A549 (cell line): ENCODE measurements at regions of chr17 and their contacts with region 1.

Region 1: GRCh38 chr17:46193626-46194392 is 580 bp upstream of the KANSL1 start:
- DNase-seq: peak; percentile 97 to 100
- ATAC-seq: peak; percentile 84 to 97
- H3K4me3 ChIP-seq: peak overlapping the region; percentile 65
- H3K27ac ChIP-seq: peak overlapping the region; percentile 90 to 97
- H3K4me1 ChIP-seq: peaks cover 49% of the 10 kb centered on the region
- CTCF ChIP-seq: peak; percentile 80
- EP300 ChIP-seq: no peak
- POLR2A ChIP-seq: peak; percentile 88
- RAD21 ChIP-seq: peak in 1 of 2 experiments; percentile 20; a peak in 2 of 5 replicates

Region 2: GRCh38 chr17:46002311-46002972 is 191.4 kb before region 1 on chr17:
- CTCF ChIA-PET with region 1: interaction called, 23 read pairs
- POLR2A ChIA-PET with region 1: no interaction called
- DNase-seq: peak; percentile 69 to 78
- ATAC-seq: peak; percentile 89 to 91
- H3K4me3 ChIP-seq: no peak overlapping the region
- H3K27ac ChIP-seq: peak overlapping the region in 1 of 2 experiments; percentile 61; a peak in 3 of 6 replicates
- H3K4me1 ChIP-seq: peaks cover 15% of the 10 kb centered on the region
- CTCF ChIP-seq: peak; percentile 93
- EP300 ChIP-seq: no peak
- POLR2A ChIP-seq: no peak
- RAD21 ChIP-seq: peak; percentile 96 to 97

Region 3: DNA sequence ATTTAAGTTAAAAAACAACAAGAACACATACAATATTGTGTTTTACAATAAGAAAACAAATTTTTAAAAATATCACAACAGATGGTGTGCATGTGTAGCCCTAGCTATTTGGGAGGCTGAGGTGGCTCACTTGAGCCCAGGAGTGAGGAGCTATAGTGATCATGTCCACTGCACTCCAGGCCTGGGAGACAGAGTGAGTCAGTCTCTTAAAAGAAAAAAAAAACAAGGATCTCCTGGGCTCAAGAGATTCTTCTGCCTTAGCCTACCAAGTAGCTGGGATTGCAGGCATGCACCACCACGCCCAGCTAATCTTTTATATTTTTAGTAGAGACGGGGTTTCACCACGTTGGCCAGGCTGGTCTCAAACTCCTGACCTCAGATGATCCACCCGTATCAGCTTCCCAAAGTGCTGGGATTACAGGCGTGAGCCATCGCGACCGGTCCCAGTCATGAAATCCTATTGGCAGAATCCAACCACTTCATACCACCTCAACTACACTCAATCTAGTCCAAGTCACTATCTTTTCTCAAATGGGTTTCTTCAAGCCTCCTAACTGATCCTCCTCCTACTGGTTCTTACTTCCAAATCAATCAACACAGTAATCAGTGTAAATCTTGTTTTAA is 139.8 kb before region 1 on chr17:
- CTCF ChIA-PET with region 1: interaction called, 30 read pairs
- POLR2A ChIA-PET with region 1: interaction called, 5 read pairs
- DNase-seq: peak in 1 of 2 experiments; percentile 43
- ATAC-seq: peak in 1 of 2 experiments; percentile 48; a peak in 3 of 6 replicates
- H3K4me3 ChIP-seq: no peak overlapping the region
- H3K27ac ChIP-seq: peak overlapping the region; percentile 5 to 43; a peak in 3 of 6 replicates
- H3K4me1 ChIP-seq: peaks cover 64% of the 10 kb centered on the region
- CTCF ChIP-seq: no peak
- EP300 ChIP-seq: no peak
- POLR2A ChIP-seq: no peak
- RAD21 ChIP-seq: no peak

Region 4: GRCh38 chr17:46078675-46079074 is 115.1 kb before region 1 on chr17:
- CTCF ChIA-PET with region 1: interaction called, 21 read pairs
- POLR2A ChIA-PET with region 1: interaction called, 3 read pairs
- DNase-seq: no peak
- ATAC-seq: no peak
- H3K4me3 ChIP-seq: no peak overlapping the region
- H3K27ac ChIP-seq: no peak overlapping the region
- H3K4me1 ChIP-seq: peaks cover 28% of the 10 kb centered on the region
- CTCF ChIP-seq: no peak
- EP300 ChIP-seq: no peak
- POLR2A ChIP-seq: no peak
- RAD21 ChIP-seq: no peak

Region 5: GRCh38 chr17:46108550-46109110 is 85.2 kb before region 1 on chr17:
- CTCF ChIA-PET with region 1: interaction called, 18 read pairs
- POLR2A ChIA-PET with region 1: interaction called, 3 read pairs
- DNase-seq: no peak
- ATAC-seq: peak in 1 of 2 experiments; percentile 27; a peak in 3 of 6 replicates
- H3K4me3 ChIP-seq: no peak overlapping the region
- H3K27ac ChIP-seq: peak overlapping the region; percentile 14 to 40; a peak in 4 of 6 replicates
- H3K4me1 ChIP-seq: peaks cover 44% of the 10 kb centered on the region
- CTCF ChIP-seq: no peak
- EP300 ChIP-seq: no peak
- POLR2A ChIP-seq: no peak
- RAD21 ChIP-seq: no peak

Region 6: GRCh38 chr17:46154151-46154816 is 39.5 kb before region 1 on chr17:
- CTCF ChIA-PET with region 1: interaction called, 27 read pairs
- POLR2A ChIA-PET with region 1: no interaction called
- DNase-seq: no peak
- ATAC-seq: peak; percentile 15 to 17; a peak in 3 of 6 replicates
- H3K4me3 ChIP-seq: no peak overlapping the region
- H3K27ac ChIP-seq: no peak overlapping the region
- H3K4me1 ChIP-seq: peaks cover 78% of the 10 kb centered on the region
- CTCF ChIP-seq: no peak
- EP300 ChIP-seq: no peak
- POLR2A ChIP-seq: no peak
- RAD21 ChIP-seq: no peak

Region 7: GRCh38 chr17:46212634-46213435 is 19.0 kb after region 1 on chr17:
- CTCF ChIA-PET with region 1: interaction called, 176 read pairs
- POLR2A ChIA-PET with region 1: interaction called, 21 read pairs
- DNase-seq: peak; percentile 88 to 95
- ATAC-seq: peak; percentile 91 to 92
- H3K4me3 ChIP-seq: no peak overlapping the region
- H3K27ac ChIP-seq: no peak overlapping the region
- H3K4me1 ChIP-seq: no peaks in the 10 kb centered on the region
- CTCF ChIP-seq: peak; percentile 99
- EP300 ChIP-seq: no peak
- POLR2A ChIP-seq: no peak
- RAD21 ChIP-seq: peak; percentile 91